GM10248 (cell line): ENCODE measurements at regions of chr6 and their contacts with region 1.

Region 1: DNA sequence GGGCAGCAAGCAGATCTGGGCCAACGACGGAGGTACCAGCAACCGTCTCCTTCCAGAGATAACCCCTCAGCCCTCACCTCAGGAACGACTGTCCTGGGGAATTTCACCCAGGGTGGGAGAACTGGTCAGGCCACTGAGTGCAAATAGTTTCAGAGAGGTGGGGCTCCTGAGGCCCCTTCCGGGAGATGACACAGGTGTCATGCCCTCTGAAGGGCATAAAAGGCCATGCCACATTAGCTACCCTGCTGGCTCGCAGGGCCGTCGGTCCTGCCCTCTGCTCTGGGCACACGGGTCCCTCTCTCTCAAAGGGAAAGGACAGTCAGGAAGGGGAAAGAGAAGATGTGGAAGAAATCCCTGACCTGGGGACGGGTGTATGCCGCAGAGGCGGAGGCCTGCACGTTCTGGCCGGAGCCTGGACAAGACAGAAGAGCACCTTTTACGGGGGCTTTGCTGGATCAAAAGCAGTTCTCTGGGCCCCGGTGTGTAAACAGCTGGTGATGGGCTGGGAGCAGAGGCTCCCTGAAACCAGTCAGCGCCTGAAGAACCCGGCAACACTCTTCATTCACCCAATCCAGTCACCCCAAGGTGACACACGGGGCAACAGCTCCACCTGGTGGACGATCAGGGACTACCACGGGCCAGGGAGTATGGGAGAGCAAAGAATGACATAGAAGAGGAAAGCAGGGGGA is 6.4 kb upstream of the TAF8 start:
- DNase-seq: peak; percentile 83
- CTCF ChIP-seq: peak; percentile 93

Region 2: DNA sequence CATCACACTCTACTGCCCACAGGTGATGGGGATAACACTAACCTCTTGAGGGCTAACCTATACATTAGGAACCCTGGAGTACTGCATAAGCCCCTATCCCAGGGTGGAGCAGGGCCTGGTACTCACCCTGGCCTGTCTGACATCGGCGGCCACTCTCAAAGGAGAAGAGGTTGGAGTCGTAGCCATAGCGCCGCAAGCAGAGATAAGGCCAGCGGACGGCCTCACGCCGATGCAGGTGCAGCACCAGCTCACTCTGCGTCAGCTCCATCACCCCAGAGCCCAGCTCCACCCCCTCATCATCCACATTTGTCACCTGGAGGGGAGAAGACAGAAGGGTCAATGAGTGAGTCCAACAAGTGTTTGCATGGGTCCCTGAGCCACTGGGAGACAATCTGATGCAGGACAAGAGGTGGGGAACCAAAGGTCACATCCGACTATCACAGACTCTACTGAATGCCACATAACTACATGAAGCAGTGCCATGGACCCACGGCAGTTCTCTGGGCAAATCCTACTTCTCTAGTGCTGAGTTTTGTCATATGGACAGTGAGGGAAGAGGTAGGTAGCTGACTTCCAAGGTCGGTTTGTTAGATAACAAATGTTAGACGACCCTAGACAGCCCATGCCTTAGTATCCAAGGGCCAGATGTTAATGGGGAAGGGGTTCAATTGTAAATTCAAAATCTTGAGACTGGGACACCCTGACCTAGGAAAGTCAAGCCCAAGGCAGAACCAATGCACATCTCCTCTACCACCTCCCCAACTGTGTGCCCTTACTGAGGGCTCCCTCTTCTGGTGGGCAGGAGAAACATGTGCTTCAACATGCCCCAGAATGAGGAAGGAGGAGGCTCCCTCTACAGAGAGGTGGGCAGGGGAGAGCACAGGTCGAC is 268.4 kb before region 1 on chr6:
- CTCF ChIA-PET with region 1: interaction called, 253 read pairs
- POLR2A ChIA-PET with region 1: no interaction called
- DNase-seq: peak; percentile 81
- CTCF ChIP-seq: peak; percentile 93

Region 3: GRCh38 chr6:41846666-41847237 is 197.2 kb before region 1 on chr6:
- CTCF ChIA-PET with region 1: interaction called, 62 read pairs
- POLR2A ChIA-PET with region 1: no interaction called
- DNase-seq: peak; percentile 70
- CTCF ChIP-seq: peak; percentile 61

Region 4: DNA sequence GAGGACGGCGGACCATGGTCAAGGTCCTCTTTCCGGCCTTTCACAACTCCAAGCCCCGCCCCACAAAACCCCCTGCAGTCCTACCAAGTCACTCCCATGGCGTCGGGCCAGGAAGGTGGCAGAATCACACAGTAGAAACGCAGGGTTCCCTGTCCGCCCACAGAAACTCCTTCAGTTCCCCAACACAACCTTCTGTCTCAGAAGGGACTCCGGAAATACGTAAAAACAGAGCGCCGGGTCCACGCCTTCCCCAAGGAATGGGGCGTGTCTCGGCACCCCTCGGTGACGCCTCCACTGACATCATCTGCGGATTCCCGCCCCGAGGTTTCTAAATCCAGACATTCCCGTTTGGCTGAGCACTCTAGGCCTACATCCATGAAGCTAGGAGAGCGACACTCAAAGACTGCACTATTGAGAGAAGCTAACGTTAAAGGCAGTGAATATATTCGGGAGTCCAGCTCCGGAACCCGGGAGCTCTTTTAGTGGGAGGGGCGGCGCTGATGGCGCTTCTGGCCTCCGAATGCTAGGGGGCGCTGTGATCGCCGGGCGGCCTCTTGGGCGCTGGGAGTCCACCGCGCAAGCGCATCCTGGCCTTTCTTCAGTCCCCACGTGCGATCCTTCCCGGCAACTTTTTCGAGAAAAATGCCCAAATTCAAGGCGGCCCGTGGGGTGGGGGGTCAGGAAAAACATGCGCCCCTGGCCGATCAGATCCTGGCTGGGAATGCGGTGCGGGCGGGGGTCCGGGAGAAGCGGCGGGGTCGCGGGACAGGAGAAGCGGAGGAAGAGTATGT is 122.8 kb before region 1 on chr6 and contains the starts of genes BYSL and MED20:
- CTCF ChIA-PET with region 1: interaction called, 44 read pairs
- POLR2A ChIA-PET with region 1: no interaction called
- DNase-seq: peak; percentile 96
- CTCF ChIP-seq: peak; percentile 92

Region 5: GRCh38 chr6:41941280-41942066 is 102.5 kb before region 1 on chr6 and contains the start of gene CCND3:
- CTCF ChIA-PET with region 1: interaction called, 57 read pairs
- POLR2A ChIA-PET with region 1: no interaction called
- DNase-seq: peak; percentile 94
- CTCF ChIP-seq: no peak

Region 6: GRCh38 chr6:42028234-42029061 is 15.5 kb before region 1 on chr6:
- CTCF ChIA-PET with region 1: interaction called, 118 read pairs
- POLR2A ChIA-PET with region 1: interaction called, 4 read pairs
- DNase-seq: no peak
- CTCF ChIP-seq: no peak